CD4-positive, alpha-beta T cell (primary cell): ENCODE measurements at regions of chr17 and their contacts with region 1.

Region 1: DNA sequence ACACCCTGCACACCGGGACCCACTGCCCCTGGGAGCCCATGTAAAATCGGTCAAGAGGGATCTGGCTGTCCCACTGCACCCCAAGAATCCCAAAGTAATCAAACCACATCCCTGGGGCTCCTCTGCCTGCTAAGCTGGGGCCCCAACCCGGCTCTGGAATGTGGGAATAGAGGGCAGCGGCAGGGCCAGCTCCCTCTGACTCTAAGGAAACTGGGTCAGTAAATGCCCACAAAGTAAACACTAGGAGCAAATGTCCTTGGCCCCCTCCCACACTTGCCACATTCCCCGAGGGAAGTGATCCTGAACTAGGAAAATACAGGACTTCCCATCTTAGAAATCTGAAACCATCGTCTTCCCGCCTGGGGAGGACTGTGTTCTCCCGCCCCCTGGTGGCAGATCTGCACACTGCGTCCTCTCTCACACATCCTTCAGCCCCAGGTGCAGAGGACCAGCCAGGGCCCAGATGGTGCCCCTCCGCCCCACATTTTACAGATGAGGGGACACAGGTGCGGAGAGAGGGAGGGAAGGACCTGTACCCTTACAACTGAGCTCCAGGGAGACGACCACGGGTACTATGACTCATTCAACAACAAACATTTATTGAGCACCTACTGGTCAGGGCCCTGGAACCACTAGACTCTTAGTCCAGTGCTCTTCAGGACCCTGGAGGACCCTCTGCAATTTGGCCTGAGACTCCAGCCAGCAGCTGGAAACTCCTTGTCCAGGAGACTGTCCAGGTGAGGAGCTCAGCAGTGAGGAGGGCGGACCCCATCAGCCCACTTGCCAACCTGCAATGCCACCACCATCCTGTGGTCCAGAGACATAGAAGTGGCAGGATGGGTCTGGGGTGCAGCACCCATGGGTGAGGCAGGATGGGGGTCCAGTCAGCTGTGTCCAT is 10.1 kb downstream of the P3H4 start:
- DNase-seq: peak; percentile 58 to 86 (median 72)
- ATAC-seq: peak; percentile 93
- H3K4me3 ChIP-seq: no peak overlapping the region
- H3K4me3 Mint-ChIP-seq: no peak overlapping the region
- H3K27ac ChIP-seq: no peak overlapping the region
- H3K27ac Mint-ChIP-seq: no peak overlapping the region
- H3K4me1 ChIP-seq: peaks cover 12% of the 10 kb centered on the region
- H3K4me1 Mint-ChIP-seq: peaks cover 5% of the 10 kb centered on the region
- H3K27me3 ChIP-seq: no peaks in the 10 kb centered on the region
- H3K27me3 Mint-ChIP-seq: peaks cover 5% of the 10 kb centered on the region
- CTCF ChIP-seq: peak; percentile 96

Region 2: DNA sequence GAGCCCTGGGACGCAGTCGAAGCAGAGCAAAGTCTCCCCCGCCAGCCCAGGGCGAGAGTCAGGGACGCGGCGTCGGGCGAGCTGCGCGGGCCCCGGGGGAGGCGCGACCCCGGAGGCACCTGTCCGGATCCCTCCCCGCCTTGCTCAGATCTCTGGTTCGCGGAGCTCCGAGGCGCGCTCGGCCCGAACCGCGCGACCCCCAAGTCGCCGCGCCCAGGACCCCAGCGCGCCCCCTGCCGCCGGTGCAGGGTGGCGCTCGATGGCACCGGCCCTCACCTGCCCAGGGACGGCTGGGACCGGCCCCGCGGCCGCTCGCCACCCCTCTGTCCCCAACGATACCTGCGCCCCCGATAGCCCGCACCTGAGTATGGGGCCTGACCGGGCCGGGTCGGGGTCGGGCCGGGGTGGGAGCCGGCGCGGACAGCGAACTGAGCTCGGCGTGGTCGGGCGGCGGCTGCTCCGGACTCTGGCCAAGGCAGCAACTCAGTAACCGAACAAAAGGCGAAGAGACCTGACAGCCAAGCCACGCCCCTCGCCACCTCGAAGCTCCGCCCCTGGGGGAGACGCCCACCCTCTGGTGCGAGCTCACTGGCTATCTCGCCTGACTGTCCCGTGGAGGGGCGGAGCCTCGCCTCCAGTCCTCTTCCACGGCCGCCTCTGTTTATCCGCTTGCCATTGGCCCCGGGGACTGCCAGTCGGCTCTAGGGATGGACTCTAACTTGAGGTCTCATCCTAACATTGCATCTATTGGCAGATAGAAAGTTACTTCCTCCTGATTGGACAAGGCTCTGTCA is 15.2 kb before region 1 on chr17 and contains the start of gene JUP:
- CTCF ChIA-PET with region 1: interaction called, 11 read pairs
- POLR2A ChIA-PET with region 1: no interaction called
- intact Hi-C with region 1: no loop called
- DNase-seq: peak; percentile 74 to 94 (median 85)
- ATAC-seq: peak; percentile 95
- H3K4me3 ChIP-seq: peak within 1 kb of the TSS; percentile 53
- H3K4me3 Mint-ChIP-seq: peak within 1 kb of the TSS; percentile 90
- H3K27ac ChIP-seq: no peak within 1 kb of the TSS
- H3K27ac Mint-ChIP-seq: no peak within 1 kb of the TSS
- H3K4me1 ChIP-seq: peaks cover 24% of the 10 kb centered on the region
- H3K4me1 Mint-ChIP-seq: peaks cover 37% of the 10 kb centered on the region
- H3K27me3 ChIP-seq: peaks cover 22 to 29% of the 10 kb centered on the region in 2 experiments
- H3K27me3 Mint-ChIP-seq: peaks cover 38% of the 10 kb centered on the region
- CTCF ChIP-seq: no peak
- total RNA-seq, gene JUP: 0.88 to 1.1 TPM

Region 3: GRCh38 chr17:41844971-41845370 is 43.3 kb after region 1 on chr17:
- CTCF ChIA-PET with region 1: no interaction called
- POLR2A ChIA-PET with region 1: no interaction called
- intact Hi-C with region 1: no loop called
- DNase-seq: no peak
- ATAC-seq: no peak
- H3K4me3 ChIP-seq: no peak overlapping the region
- H3K4me3 Mint-ChIP-seq: no peak overlapping the region
- H3K27ac ChIP-seq: no peak overlapping the region
- H3K27ac Mint-ChIP-seq: no peak overlapping the region
- H3K4me1 ChIP-seq: no peaks in the 10 kb centered on the region
- H3K4me1 Mint-ChIP-seq: peaks cover 9% of the 10 kb centered on the region
- H3K27me3 ChIP-seq: no peaks in the 10 kb centered on the region
- H3K27me3 Mint-ChIP-seq: no peaks in the 10 kb centered on the region
- CTCF ChIP-seq: no peak